Endothelial cell of umbilical vein (primary cell): ENCODE measurements at regions of chr3 and their contacts with region 1.

Region 1: DNA sequence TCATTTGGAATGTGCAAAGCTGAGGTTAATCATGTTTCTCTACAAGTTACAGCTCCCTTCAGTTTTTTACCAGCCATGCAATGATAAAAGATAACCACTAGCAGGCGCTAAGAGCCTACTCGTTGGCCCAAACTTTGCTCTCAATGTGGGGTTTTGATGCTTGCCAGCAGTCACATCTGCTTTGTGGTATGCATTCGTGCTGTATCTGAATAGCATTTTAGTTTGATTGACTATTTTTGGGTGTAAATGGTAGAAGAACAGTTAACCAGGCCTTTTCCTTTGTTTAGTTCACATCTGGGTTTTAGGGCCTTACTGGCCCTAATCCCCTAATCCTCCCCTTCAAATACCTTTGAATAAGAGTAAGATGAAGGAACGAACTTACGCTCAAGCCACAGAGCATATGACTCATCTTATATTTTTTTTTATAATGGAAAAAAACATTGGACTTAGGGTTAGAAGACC is 4.4 kb upstream of the CLDN11 start:
- DNase-seq: peak; percentile 80
- H3K4me3 ChIP-seq: no peak overlapping the region
- H3K27ac ChIP-seq: no peak overlapping the region
- H3K4me1 ChIP-seq: peaks cover 5% of the 10 kb centered on the region
- H3K27me3 ChIP-seq: no peaks in the 10 kb centered on the region
- CTCF ChIP-seq: peak; percentile 90 to 92
- POLR2A ChIP-seq: no peak

Region 2: DNA sequence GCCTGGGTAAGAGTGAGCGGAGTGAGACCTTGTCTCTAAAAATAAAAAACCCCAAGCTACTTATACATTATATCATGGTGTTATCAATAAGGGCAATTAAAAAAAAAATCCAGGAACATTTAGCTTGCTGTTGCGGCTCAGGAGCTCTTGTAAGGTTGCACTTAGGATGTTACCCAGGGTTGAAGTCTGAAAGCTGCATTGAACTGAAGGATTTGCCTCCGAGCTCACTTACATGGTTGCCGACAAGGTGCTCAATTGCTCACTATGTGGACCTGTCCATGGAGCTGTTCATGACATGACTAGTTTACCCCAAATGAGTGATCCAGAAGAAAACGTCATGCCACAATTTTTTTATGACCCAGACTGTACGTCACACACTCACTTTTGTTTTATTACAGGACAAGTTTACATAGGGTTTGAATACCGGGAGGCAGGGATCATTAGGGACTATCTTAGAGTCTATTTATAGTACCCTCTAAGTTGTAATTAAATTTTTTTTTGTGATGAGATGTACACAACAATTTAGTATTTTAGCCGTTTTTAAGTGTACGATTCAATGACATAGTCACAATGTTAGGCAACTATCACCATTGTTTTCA is 16.6 kb before region 1 on chr3:
- CTCF ChIA-PET with region 1: interaction called, 24 read pairs
- POLR2A ChIA-PET with region 1: no interaction called
- dilution Hi-C with region 1: no loop called
- intact Hi-C with region 1: no loop called
- DNase-seq: no peak
- H3K4me3 ChIP-seq: no peak overlapping the region
- H3K27ac ChIP-seq: no peak overlapping the region
- H3K4me1 ChIP-seq: no peaks in the 10 kb centered on the region
- H3K27me3 ChIP-seq: no peaks in the 10 kb centered on the region
- CTCF ChIP-seq: no peak
- POLR2A ChIP-seq: peak; percentile 57

Region 3: GRCh38 chr3:170523248-170523647 is 109.0 kb after region 1 on chr3:
- CTCF ChIA-PET with region 1: no interaction called
- POLR2A ChIA-PET with region 1: no interaction called
- dilution Hi-C with region 1: no loop called
- intact Hi-C with region 1: loop called (anchors 2 kb)
- DNase-seq: peak; percentile 77
- H3K4me3 ChIP-seq: no peak overlapping the region
- H3K27ac ChIP-seq: peak overlapping the region; percentile 45
- H3K4me1 ChIP-seq: peaks cover 11% of the 10 kb centered on the region
- H3K27me3 ChIP-seq: no peaks in the 10 kb centered on the region
- CTCF ChIP-seq: no peak
- POLR2A ChIP-seq: no peak

Region 4: GRCh38 chr3:170745211-170745718 is 331.0 kb after region 1 on chr3:
- CTCF ChIA-PET with region 1: interaction called, 9 read pairs
- POLR2A ChIA-PET with region 1: no interaction called
- dilution Hi-C with region 1: no loop called
- intact Hi-C with region 1: loop called (anchors 1 kb)
- DNase-seq: peak; percentile 89
- H3K4me3 ChIP-seq: no peak overlapping the region
- H3K27ac ChIP-seq: peak overlapping the region; percentile 90
- H3K4me1 ChIP-seq: peaks cover 64% of the 10 kb centered on the region
- H3K27me3 ChIP-seq: no peaks in the 10 kb centered on the region
- CTCF ChIP-seq: no peak
- POLR2A ChIP-seq: peak; percentile 56

Region 5: DNA sequence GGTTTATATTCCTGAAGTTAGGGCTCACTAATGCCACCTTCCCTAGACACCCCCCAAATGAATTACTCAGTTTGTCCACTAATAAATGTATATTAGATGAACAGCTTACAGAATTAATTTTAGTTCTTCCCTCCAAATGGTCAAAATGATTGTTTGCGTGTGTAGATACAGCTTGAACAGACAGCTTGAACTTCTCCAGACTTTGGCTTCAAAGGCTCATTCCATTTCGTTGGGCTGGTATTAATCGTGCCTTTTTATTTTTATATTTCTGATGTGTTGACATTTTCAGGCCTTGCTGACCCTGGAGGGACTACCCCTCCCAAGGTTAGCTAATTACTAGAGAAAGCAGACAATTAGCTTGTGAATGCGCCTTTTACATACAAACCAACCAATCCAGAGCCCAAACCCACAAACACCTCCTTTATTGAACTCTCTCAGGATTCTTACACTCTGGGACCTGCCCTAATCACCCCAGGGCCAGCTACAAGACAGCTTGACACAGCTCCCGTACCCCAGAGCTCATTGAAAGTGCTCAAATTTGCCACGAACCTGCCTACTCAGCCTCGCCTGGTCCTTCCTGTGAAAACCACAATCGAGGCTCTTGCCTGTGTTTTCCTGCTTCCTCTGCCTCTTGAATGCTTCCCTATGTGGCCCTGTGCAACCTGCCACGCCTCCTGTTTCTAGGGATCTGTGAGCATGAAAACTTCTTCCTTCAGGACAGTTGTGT is 415.5 kb after region 1 on chr3:
- CTCF ChIA-PET with region 1: interaction called, 11 read pairs
- POLR2A ChIA-PET with region 1: no interaction called
- dilution Hi-C with region 1: no loop called
- intact Hi-C with region 1: no loop called
- DNase-seq: no peak
- H3K4me3 ChIP-seq: no peak overlapping the region
- H3K27ac ChIP-seq: no peak overlapping the region
- H3K4me1 ChIP-seq: no peaks in the 10 kb centered on the region
- H3K27me3 ChIP-seq: peaks cover 19 to 24% of the 10 kb centered on the region in 2 experiments
- CTCF ChIP-seq: no peak
- POLR2A ChIP-seq: no peak

Region 6: DNA sequence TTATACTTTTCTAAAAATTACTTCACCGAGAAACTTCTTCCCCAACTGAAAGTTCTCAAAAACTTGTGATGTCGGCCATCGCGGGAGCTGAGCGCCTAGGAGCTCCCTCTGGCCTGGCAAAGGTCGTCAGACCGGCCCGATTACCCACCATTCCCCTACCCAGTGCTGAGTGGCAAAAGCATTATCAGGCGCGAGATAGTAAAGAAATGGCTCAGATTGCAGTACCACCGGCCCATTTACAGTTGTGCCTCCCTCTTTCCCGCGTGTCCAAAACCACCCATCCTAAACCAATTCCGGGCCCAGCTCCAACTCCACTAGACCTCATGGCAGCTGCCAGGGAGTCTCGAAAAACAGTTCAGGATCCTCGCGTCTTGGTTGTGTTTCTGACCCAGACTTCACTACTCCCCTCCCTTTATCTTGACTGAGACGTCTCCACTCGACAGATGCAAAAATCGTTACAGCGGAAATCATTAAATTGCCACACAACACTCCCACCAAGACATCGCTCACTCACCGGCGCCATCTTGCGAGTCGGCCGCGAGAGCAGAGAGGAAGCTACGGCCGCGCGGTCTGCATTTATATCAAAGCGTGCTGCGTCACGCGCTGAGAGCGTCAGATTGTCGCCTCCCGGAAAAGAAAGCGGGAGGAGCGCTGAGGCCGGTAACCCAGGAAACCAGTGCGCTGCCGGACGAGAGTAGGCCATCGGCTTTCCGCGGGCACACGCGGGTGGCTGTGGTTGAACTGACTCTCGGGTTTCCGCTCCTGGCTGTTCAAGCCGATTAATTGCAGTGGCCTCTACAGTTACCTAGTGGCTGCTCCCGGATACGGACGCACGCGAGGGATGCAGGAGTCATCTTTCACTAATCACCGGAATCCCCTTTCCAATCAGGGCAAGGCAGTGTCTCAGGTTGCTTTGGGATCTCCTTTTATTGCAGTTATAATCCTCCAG is 455.7 kb after region 1 on chr3 and contains the start of gene RPL22L1:
- CTCF ChIA-PET with region 1: interaction called, 8 read pairs
- POLR2A ChIA-PET with region 1: no interaction called
- dilution Hi-C with region 1: no loop called
- intact Hi-C with region 1: loop called (anchors 5 kb)
- DNase-seq: peak; percentile 94
- H3K4me3 ChIP-seq: peak within 1 kb of the TSS; percentile 79 to 94 (median 84)
- H3K27ac ChIP-seq: peak within 1 kb of the TSS; percentile 87
- H3K4me1 ChIP-seq: peaks cover 21% of the 10 kb centered on the region
- H3K27me3 ChIP-seq: no peaks in the 10 kb centered on the region
- CTCF ChIP-seq: peak in 1 of 2 donors; percentile 13
- POLR2A ChIP-seq: peak; percentile 99
- total RNA-seq, gene RPL22L1: 159 and 176 TPM in 2 replicates

Region 7: GRCh38 chr3:170941551-170941950 is 527.3 kb after region 1 on chr3:
- CTCF ChIA-PET with region 1: no interaction called
- POLR2A ChIA-PET with region 1: no interaction called
- dilution Hi-C with region 1: no loop called
- intact Hi-C with region 1: no loop called
- DNase-seq: peak; percentile 40
- H3K4me3 ChIP-seq: no peak overlapping the region
- H3K27ac ChIP-seq: no peak overlapping the region
- H3K4me1 ChIP-seq: peaks cover 10% of the 10 kb centered on the region
- H3K27me3 ChIP-seq: peaks cover 0 to 6% of the 10 kb centered on the region in 2 experiments
- CTCF ChIP-seq: no peak
- POLR2A ChIP-seq: no peak